A673 (cell line): ENCODE measurements at regions of chr13 and their contacts with region 1.

Region 1: DNA sequence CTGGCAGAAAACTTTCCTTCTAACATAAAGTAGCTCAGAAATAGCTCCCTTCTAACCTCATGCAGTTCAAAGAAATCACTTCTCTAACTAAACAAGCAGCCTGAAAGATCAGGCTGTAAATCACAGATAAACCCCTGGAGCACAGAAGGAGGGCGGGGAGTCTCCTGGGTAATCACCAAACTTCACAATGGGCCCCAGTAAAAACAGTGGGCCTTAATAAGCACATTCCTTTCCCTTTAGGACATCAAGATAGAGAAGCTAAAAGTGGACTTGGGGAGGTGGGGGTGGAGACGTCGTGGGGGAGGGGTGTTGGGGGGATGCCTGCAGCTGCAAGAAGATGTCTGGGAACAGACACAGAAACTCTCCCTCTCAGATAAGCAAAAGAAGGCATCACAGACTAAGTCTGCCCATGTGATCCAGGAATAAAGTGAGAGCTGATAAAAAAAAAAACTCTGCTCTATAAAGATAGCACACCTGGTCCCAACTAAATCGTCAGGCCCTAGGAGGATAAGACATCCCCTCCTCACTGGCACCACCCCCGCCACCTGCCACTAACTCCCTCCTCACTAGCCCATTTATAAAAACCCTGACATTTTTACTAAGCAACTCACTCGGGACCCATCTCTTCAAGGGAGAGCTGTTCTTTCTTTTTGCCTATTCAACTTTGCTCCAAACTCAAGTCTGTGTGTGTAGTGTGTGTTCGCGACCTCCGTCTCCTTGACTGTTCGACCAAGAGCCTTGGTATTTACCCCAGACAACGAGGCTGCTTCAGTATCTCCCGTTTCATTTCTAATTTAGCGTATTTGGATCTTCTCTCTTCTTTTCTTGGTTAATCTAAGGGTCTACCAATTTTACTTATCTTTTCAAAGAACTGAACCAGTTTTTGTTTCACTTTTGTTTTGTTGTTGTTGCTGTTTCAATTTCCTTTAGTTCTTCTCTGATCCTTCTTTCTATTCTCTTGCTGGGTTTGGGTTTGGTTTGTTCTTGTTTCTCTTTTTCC is 31.7 kb downstream of the DNAJC15 start:
- DNase-seq: peak; percentile 83
- H3K4me3 ChIP-seq: peak overlapping the region; percentile 38
- H3K27ac ChIP-seq: peak overlapping the region; percentile 74
- H3K4me1 ChIP-seq: peaks cover 32% of the 10 kb centered on the region
- H3K27me3 ChIP-seq: no peaks in the 10 kb centered on the region
- CTCF ChIP-seq: no peak

Region 2: DNA sequence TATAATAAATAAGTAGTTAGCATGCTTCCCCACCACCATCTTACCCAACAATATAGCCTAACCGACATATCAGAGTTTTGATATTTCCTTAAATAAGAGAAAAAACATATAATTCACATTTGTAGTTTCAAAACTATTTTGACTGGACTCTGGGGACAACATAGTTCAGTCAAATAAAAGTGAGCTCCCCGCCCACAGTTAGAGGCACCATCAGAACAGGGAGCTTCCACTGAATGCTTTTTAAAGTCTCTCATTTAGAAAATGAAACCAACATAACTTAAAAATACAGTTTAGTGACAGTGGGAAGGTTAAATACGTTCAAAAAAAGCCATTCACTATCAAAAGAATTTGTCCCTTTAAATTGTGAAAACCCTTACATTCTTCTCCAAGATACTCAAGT is 155.8 kb before region 1 on chr13:
- CTCF ChIA-PET with region 1: no interaction called
- POLR2A ChIA-PET with region 1: interaction called, 17 read pairs
- intact Hi-C with region 1: no loop called
- DNase-seq: no peak
- H3K4me3 ChIP-seq: no peak overlapping the region
- H3K27ac ChIP-seq: no peak overlapping the region
- H3K4me1 ChIP-seq: no peaks in the 10 kb centered on the region
- H3K27me3 ChIP-seq: no peaks in the 10 kb centered on the region
- CTCF ChIP-seq: no peak